Adrenal gland (tissue), 19 donors: ENCODE measurements at regions of chr7 and their contacts with region 1.

Region 1: DNA sequence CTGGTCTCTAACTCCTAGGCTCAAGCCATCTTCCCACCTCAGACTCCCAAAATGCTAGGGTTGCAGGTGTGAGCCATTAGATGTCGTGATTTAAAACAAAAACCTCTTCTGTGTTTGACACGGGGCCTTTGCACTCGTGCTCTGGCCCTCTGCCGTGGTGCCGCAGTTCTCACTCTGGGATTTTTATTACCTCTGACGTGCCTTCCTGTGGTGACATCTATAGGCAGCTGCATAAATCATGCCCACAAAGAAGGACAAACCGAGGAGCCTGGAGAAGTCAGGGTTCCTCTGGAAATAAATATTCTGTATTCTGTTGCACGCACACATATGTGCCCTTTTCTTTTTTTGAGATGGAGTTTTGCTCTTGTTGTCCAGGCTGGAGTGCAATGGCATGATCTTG is 25.9 kb upstream of the OCM start:
- DNase-seq: no peak
- H3K4me3 ChIP-seq: no peak overlapping the region
- H3K27ac ChIP-seq: no peak overlapping the region
- H3K4me1 ChIP-seq: no peaks in the 10 kb centered on the region
- H3K27me3 ChIP-seq: no peaks in the 10 kb centered on the region
- CTCF ChIP-seq: no peak
- POLR2A ChIP-seq: no peak

Region 2: DNA sequence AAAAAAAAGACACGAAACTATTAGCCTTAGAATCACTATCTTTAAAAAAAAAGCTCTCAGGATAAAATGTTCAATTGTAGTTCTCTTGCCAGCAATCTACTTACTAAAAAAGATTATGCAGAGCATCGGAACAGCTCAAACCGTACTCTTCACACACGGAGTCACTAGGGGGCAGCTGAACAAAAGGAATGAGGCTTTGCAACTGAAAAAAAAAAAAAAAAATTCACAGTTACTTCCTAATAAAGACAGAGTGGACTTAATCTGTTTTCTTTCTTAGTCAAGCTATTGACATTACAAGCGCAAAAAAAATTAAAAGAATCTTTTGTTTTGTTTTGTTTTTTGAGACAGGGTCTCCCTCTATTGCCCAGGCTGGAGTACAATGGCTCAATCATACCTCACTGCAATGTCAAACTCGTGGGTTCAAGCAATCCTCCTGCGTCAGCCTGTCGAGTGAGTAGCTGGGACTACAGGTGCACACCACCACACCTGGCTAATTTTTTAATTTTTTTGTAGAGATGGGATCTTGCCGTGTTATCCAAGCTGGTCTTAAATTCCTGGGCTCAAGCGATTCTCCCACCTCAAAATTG is 142.6 kb after region 1 on chr7:
- intact Hi-C with region 1: loop called in 1 of 2 experiments (anchors 10 kb)
- DNase-seq: peak; percentile 56 to 81 (median 67)
- H3K4me3 ChIP-seq: no peak overlapping the region
- H3K27ac ChIP-seq: no peak overlapping the region
- H3K4me1 ChIP-seq: no peaks in the 10 kb centered on the region
- H3K27me3 ChIP-seq: no peaks in the 10 kb centered on the region
- CTCF ChIP-seq: peak; percentile 41 to 83 (median 62)
- POLR2A ChIP-seq: no peak

Region 3: GRCh38 chr7:6323967-6324701 is 469.4 kb after region 1 on chr7:
- intact Hi-C with region 1: loop called in 1 of 2 experiments (anchors 5 kb)
- DNase-seq: no peak
- H3K4me3 ChIP-seq: no peak overlapping the region
- H3K27ac ChIP-seq: no peak overlapping the region
- H3K4me1 ChIP-seq: no peaks in the 10 kb centered on the region
- H3K27me3 ChIP-seq: no peaks in the 10 kb centered on the region
- CTCF ChIP-seq: no peak
- POLR2A ChIP-seq: no peak

Region 4: GRCh38 chr7:6435486-6436384 is 581.0 kb after region 1 on chr7:
- intact Hi-C with region 1: loop called in 1 of 2 experiments (anchors 10 kb)
- DNase-seq: peak; percentile 71 to 89 (median 75)
- H3K4me3 ChIP-seq: no peak overlapping the region
- H3K27ac ChIP-seq: peak overlapping the region in 3 of 5 donors; percentile 33 to 60 (median 47)
- H3K4me1 ChIP-seq: peaks cover 10 to 26% of the 10 kb centered on the region in 2 donors
- H3K27me3 ChIP-seq: no peaks in the 10 kb centered on the region
- CTCF ChIP-seq: peak; percentile 86 to 97 (median 92)
- POLR2A ChIP-seq: no peak

Region 5: DNA sequence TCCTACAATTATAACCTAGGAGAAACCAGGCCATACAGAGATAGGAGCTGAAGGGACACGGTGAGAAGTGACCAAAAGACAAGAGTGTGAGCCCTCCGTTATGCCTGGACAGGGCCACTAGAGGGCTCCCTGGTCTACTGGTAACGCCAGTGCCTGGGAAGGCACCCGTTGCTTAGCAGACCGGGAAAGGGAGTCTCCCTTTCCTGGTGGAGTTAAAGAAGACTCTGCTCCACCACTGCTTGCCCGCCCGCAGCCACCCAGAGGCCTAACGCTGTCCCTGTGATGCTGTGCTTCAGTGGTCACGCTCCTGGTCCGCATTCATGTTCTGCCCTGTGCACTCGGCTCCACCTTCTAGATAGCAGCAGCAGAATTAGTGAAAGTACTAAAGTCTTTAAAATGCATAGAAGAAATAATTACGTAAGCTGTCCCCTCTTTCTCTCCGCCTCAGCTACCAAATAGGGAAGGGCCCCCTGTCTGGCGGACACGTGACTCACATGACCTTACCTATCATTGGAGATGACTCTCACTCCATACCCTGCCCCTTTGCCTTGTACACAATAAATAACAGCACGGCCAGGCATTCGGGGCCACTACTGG is 661.7 kb after region 1 on chr7:
- intact Hi-C with region 1: no loop called
- DNase-seq: peak; percentile 82 to 94 (median 88)
- H3K4me3 ChIP-seq: peak overlapping the region in 1 of 4 donors; percentile 25
- H3K27ac ChIP-seq: peak overlapping the region in 1 of 5 donors; percentile 1
- H3K4me1 ChIP-seq: peaks cover 0 to 5% of the 10 kb centered on the region in 2 donors
- H3K27me3 ChIP-seq: peaks cover 7% of the 10 kb centered on the region
- CTCF ChIP-seq: peak; percentile 76 to 90 (median 81)
- POLR2A ChIP-seq: no peak